ENCODE measurements at regions of chr6 and their contacts with region 1.

Region 1: GRCh38 chr6:103326760-103327757 is 1532.7 kb downstream of the HACE1 start:
- DNase-seq: no peak
- H3K4me3 ChIP-seq: no peak overlapping the region
- H3K27ac ChIP-seq: no peak overlapping the region
- H3K4me1 ChIP-seq: no peaks in the 10 kb centered on the region
- H3K27me3 ChIP-seq: no peaks in the 10 kb centered on the region
- CTCF ChIP-seq: no peak
- POLR2A ChIP-seq: no peak

Region 2: GRCh38 chr6:102417368-102417998 is 909.6 kb before region 1 on chr6:
- intact Hi-C with region 1: no loop called
- DNase-seq: no peak
- H3K4me3 ChIP-seq: no peak overlapping the region
- H3K27ac ChIP-seq: no peak overlapping the region
- H3K4me1 ChIP-seq: no peaks in the 10 kb centered on the region
- H3K27me3 ChIP-seq: no peaks in the 10 kb centered on the region
- CTCF ChIP-seq: no peak
- POLR2A ChIP-seq: no peak

Region 3: GRCh38 chr6:103183831-103184411 is 143.1 kb before region 1 on chr6:
- intact Hi-C with region 1: no loop called
- DNase-seq: no peak
- H3K4me3 ChIP-seq: no peak overlapping the region
- H3K27ac ChIP-seq: no peak overlapping the region
- H3K4me1 ChIP-seq: no peaks in the 10 kb centered on the region
- H3K27me3 ChIP-seq: no peaks in the 10 kb centered on the region
- CTCF ChIP-seq: no peak
- POLR2A ChIP-seq: no peak

Region 4: GRCh38 chr6:103273048-103273447 is 54.0 kb before region 1 on chr6:
- intact Hi-C with region 1: loop called (anchors 10 kb)
- DNase-seq: no peak
- H3K4me3 ChIP-seq: no peak overlapping the region
- H3K27ac ChIP-seq: no peak overlapping the region
- H3K4me1 ChIP-seq: no peaks in the 10 kb centered on the region
- H3K27me3 ChIP-seq: no peaks in the 10 kb centered on the region
- CTCF ChIP-seq: no peak
- POLR2A ChIP-seq: no peak

Region 5: DNA sequence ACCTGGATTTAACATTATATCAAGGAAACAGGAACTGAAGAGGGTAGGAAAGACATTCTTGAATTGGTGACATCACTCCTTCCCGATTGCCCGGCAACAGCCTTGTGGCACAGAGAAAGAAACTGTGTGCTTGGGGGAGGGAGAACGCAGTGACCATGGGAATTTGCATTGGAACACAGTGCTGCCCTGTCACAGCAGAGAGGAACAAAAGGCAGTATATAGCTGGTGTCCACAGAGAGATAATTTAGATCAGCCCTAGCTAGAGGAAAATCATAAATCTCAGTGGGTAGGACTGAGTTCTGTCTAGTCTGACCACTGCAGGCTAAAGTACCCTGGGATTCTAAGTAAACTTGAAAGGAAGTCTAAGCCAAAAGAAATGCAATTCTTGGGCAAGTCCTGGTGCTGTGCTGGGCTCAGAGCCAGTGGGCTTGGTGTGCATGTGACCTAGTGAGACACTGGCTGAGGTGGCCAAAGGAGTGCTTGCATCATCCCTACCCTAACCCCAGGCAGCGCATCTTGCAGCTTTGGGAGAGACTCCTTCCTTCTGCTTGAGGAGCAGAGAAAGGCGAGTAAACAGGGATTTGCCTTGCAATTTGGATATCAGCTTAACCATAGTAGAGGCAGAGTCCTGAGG is 835.1 kb after region 1 on chr6:
- intact Hi-C with region 1: no loop called
- DNase-seq: no peak
- H3K4me3 ChIP-seq: no peak overlapping the region
- H3K27ac ChIP-seq: no peak overlapping the region
- H3K4me1 ChIP-seq: no peaks in the 10 kb centered on the region
- H3K27me3 ChIP-seq: no peaks in the 10 kb centered on the region
- CTCF ChIP-seq: no peak
- POLR2A ChIP-seq: no peak

Measured in breast epithelium (tissue), 4 donors.